Lower leg skin (tissue), 4 donors: ENCODE measurements at regions of chr2 and their contacts with region 1.

Region 1: DNA sequence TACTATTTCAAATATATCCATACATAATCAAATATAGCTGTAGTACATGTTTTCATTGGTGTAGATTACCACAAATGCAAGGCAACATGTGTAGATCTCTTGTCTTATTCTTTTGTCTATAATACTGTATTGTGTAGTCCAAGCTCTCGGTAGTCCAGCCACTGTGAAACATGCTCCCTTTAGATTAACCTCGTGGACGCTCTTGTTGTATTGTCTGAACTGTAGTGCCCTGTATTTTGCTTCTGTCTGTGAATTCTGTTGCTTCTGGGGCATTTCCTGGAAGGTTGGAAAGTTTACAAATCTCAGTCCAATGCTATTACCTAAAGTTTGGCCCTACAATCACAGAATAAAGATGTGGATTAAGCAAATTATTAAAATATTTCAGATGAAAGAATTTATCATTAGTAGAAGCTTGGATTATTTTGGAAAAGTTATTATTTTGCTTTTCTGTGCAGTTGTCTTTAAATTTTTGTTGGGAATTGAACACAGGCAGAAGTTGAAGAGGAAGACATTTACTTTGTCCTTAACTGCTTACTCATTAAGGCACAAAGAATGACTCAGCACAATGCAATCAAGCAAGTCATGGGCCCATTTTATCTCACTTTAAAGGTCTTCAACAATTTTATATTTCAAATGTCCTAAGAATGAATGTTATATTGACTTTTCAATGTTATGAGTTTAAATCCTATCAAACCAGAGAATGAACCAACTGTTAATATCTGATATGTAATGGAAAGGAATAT is 103.4 kb upstream of the CAVIN2 start:
- DNase-seq: no peak
- H3K4me3 ChIP-seq: no peak overlapping the region
- CTCF ChIP-seq: no peak
- POLR2A ChIP-seq: no peak

Region 2: GRCh38 chr2:191333911-191334357 is 616.4 kb before region 1 on chr2:
- intact Hi-C with region 1: loop called (anchors 5 kb)
- DNase-seq: peak in 1 of 2 donors; percentile 69
- H3K4me3 ChIP-seq: no peak overlapping the region
- CTCF ChIP-seq: no peak
- POLR2A ChIP-seq: no peak

Region 3: DNA sequence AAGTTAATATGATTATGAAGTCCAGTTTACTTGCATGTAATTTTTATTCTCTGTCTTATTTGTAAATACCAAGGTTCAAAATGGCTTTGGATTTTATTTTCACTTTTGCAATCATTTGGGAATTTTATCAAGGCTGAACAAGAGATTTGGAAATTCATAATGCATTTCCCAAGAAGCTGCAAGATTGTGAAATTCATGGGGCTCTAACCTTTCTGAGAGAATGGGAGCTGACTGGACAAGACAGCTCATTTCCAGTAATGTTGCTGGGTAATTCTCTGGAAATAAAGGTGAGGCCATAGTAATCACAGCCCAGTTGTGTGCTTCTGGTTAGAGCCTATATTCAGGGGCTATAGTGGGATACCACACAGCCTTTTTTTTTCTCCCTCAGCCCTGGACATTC is 293.9 kb before region 1 on chr2:
- intact Hi-C with region 1: no loop called
- DNase-seq: no peak
- H3K4me3 ChIP-seq: no peak overlapping the region
- CTCF ChIP-seq: no peak
- POLR2A ChIP-seq: no peak